Upper lobe of right lung (tissue), 1 donor: ENCODE measurements at regions of chr17 and their contacts with region 1.

Region 1: GRCh38 chr17:79393358-79394202 is 217.3 kb downstream of the RBFOX3 start:
- DNase-seq: peak; percentile 88
- ATAC-seq: peak; percentile 83
- H3K4me3 ChIP-seq: no peak overlapping the region
- H3K27ac ChIP-seq: no peak overlapping the region
- H3K4me1 ChIP-seq: no peaks in the 10 kb centered on the region
- H3K27me3 ChIP-seq: peaks cover 84% of the 10 kb centered on the region
- CTCF ChIP-seq: peak; percentile 88

Region 2: GRCh38 chr17:79087428-79088143 is 306.0 kb before region 1 on chr17:
- intact Hi-C with region 1: loop called (anchors 5 kb)
- DNase-seq: peak; percentile 84
- ATAC-seq: peak; percentile 83
- H3K4me3 ChIP-seq: no peak overlapping the region
- H3K27ac ChIP-seq: no peak overlapping the region
- H3K4me1 ChIP-seq: no peaks in the 10 kb centered on the region
- H3K27me3 ChIP-seq: peaks cover 18% of the 10 kb centered on the region
- CTCF ChIP-seq: peak; percentile 94

Region 3: DNA sequence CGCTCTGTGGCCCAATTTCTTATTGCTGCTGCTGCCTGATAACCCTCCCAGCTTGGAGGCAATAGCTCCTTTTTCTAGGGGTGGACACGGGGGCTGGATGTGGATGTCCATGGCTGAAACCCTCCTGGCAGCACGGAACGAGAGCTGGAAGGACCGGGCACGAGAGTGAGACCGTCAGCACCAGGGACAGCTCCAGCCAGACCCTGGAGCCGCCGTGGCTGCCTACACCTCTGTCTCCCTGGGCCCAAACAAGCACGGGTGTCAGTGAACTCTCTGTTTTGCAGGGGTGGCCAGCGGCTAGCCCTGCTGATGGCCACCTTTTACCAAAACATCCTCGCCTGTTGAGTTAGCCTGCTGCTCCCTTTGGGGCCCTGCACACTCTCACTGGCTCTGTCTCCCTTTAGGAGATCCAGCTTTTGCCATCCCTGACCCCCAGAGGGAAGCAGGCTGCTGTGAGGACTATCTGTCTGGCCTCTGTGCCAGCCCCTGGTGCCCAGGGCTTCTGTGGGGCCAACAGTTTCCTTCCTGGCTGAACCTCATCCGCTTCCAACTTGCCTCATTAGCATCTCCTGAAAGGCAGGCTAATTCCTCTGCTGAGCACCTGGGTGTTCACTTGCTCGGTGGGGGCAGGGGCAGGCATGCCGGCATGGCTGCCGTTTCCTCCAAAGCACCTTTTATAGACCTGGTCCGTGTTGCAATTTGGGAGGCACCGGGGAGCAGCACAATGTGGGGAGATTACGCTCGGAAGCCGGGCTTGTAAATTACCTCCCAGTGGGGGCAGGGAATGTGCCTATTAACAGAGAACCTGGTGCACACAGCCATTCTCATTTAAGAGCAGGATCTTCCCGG is 200.9 kb before region 1 on chr17:
- intact Hi-C with region 1: loop called (anchors 10 kb)
- DNase-seq: no peak
- ATAC-seq: peak; percentile 32
- H3K4me3 ChIP-seq: no peak overlapping the region
- H3K27ac ChIP-seq: no peak overlapping the region
- H3K4me1 ChIP-seq: no peaks in the 10 kb centered on the region
- H3K27me3 ChIP-seq: peaks cover 40% of the 10 kb centered on the region
- CTCF ChIP-seq: no peak

Region 4: DNA sequence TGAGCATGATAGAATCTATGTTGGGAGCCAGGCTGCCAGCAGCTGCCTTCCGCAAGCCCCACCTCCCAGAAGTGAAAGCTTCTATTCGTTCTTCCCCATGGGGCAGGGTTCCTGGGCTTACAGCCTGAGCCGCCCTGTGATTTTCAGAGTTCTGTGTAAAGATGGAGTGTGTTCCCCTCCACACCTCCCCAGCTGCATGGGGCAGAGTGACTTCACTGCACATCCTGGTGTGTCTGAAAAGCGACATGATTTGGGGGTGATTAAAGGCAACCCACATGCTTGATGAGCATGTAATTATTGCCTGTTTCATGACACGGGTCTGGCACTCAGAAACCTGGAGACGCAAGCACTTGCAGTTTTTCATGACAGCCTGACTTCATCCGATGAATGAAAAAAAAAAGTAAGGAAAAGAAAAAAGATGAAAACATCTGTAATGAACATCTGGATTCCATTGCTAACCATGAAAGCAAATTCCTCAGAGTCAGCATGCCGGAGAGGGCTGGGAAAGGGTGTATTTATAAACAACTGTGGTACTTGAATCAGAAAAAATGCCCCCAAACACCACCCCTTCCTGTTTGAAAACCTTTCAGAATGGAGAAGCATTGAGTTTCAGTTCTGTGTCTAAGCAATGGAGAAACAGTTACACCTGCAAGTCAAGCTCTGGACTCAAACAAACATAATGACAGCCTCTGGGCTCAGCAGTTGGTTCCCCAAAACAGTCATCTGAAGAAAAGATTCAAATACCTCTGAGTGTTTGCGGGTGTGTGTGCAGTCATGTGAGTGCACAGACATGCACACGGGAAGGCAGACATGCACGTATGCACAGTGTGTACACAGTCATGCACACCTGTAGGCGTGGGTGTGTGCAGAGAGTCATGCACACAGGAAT is 53.0 kb before region 1 on chr17:
- intact Hi-C with region 1: no loop called
- DNase-seq: no peak
- ATAC-seq: no peak
- H3K4me3 ChIP-seq: no peak overlapping the region
- H3K27ac ChIP-seq: no peak overlapping the region
- H3K4me1 ChIP-seq: no peaks in the 10 kb centered on the region
- H3K27me3 ChIP-seq: peaks cover 10% of the 10 kb centered on the region
- CTCF ChIP-seq: no peak